CD8-positive, alpha-beta T cell (primary cell): ENCODE measurements at regions of chr17 and their contacts with region 1.

Region 1: DNA sequence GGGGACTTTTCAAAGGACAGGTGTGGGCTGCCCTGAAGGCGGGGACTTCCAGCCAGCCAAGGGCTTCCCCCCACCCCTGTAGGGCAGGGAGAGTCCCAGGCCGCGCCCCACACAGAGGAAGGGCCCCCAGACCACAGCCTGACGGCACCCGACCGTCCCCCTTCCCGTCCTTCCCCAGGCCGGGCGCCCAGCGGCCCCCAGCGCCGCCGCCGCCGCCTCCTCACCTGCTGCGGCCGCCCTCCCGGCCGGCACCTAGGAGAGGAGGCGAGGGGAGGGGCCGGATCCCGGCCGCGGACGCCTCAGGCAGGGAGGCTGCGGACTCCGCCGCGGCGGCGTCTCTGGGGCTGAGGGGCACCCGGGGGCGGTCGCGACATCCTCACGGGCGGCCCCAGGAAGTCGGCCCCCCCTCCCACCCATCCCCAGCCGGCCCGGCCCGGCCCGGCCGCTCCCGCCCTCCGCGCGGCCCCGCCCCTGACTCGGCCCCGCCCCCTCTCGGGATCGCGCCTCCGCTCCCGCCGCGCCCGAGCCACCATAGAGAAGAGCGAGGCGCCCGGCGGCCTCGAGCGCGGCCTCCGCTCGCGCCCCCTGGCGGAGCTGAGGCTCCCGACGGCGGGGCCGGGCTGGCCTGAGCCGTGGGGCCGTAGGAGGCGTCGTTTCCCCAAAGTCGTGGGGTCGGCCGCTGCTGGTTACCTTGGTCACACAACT is 25.5 kb upstream of the RFFL start:
- DNase-seq: peak; percentile 81 to 96 (median 91)
- ATAC-seq: peak; percentile 78
- H3K4me3 ChIP-seq: peak overlapping the region; percentile 68
- H3K4me3 Mint-ChIP-seq: peak overlapping the region; percentile 97
- H3K27ac ChIP-seq: peak overlapping the region; percentile 65 to 89
- H3K27ac Mint-ChIP-seq: peak overlapping the region; percentile 98
- H3K4me1 ChIP-seq: peaks cover 27% of the 10 kb centered on the region
- H3K4me1 Mint-ChIP-seq: peaks cover 43% of the 10 kb centered on the region
- H3K27me3 ChIP-seq: no peaks in the 10 kb centered on the region
- H3K27me3 Mint-ChIP-seq: no peaks in the 10 kb centered on the region
- CTCF ChIP-seq: peak; percentile 69

Region 2: DNA sequence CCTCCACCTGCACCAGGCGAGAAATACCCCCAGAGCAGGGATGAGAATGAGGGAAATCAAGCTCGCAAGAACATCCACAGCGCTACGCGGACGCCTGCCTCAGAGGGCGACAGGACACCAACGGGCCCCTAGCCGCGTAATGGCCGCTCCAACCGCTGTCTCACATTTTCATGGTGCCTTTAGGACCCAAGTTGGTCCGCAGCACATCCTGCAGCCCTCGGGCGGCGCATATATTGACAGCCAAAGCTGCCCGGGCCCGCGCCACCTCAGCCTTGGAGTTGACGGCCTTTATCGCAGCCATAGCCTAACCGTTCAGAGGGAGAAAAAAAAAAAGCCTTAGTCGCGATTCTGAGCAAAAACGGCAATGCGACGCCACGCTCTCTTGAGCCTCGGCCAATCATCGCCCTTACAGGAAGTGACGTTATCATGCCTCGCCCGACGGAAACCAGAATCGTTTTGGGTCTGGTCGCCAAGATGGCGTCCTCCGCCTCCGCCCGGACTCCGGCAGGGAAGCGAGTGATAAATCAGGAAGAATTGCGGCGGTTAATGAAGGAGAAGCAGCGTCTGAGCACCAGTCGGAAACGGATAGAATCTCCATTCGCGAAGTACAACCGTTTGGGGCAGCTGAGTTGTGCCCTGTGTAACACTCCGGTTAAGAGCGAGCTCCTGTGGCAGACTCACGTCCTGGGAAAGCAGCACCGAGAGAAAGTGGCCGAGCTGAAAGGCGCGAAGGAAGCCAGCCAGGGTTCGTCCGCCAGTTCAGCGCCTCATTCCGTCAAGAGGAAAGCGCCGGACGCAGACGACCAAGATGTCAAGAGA is 127.7 kb before region 1 on chr17 and contains the starts of genes CCT6B and ZNF830:
- CTCF ChIA-PET with region 1: interaction called, 3 read pairs
- POLR2A ChIA-PET with region 1: interaction called, 5 read pairs
- intact Hi-C with region 1: loop called (anchors 1 kb)
- DNase-seq: peak; percentile 75 to 97 (median 92)
- ATAC-seq: peak; percentile 88
- H3K4me3 ChIP-seq: peak within 1 kb of the TSS; percentile 72 to 78
- H3K4me3 Mint-ChIP-seq: peak within 1 kb of the TSS; percentile 100
- H3K27ac ChIP-seq: peak within 1 kb of the TSS; percentile 84 to 99
- H3K27ac Mint-ChIP-seq: peak within 1 kb of the TSS; percentile 99
- H3K4me1 ChIP-seq: peaks cover 22% of the 10 kb centered on the region
- H3K4me1 Mint-ChIP-seq: peaks cover 40% of the 10 kb centered on the region
- H3K27me3 ChIP-seq: no peaks in the 10 kb centered on the region
- H3K27me3 Mint-ChIP-seq: peaks cover 6% of the 10 kb centered on the region
- CTCF ChIP-seq: no peak
- total RNA-seq, gene CCT6B: 4.0 to 5.9 TPM
- total RNA-seq, gene ZNF830: 43.6 to 45.0 TPM

Region 3: DNA sequence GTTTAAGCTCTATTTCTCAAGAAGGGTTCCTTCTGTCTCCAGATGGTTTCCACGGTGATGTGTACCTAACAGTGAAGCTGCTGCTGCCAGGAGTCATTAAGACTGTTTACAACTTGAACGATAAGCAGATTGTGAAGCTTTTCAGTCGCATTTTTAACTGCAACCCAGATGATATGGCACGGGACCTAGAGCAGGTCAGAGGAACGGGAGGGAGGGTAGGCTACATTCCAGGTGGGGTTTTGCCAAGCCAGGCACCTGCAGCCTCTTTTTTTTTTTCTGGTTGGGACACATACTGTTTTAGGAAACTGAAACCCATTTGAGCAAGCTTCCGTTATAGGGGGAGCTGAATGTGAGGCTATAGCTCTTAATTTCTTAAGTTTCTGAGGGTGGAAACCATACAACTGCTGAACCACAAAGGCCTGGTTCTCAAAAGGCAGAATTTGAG is 98.1 kb before region 1 on chr17:
- CTCF ChIA-PET with region 1: interaction called, 20 read pairs
- POLR2A ChIA-PET with region 1: interaction called, 4 read pairs
- intact Hi-C with region 1: no loop called
- DNase-seq: no peak
- ATAC-seq: no peak
- H3K4me3 ChIP-seq: no peak overlapping the region
- H3K4me3 Mint-ChIP-seq: no peak overlapping the region
- H3K27ac ChIP-seq: no peak overlapping the region
- H3K27ac Mint-ChIP-seq: no peak overlapping the region
- H3K4me1 ChIP-seq: no peaks in the 10 kb centered on the region
- H3K4me1 Mint-ChIP-seq: peaks cover 5% of the 10 kb centered on the region
- H3K27me3 ChIP-seq: no peaks in the 10 kb centered on the region
- H3K27me3 Mint-ChIP-seq: no peaks in the 10 kb centered on the region
- CTCF ChIP-seq: no peak

Region 4: GRCh38 chr17:35022536-35023063 is 66.4 kb before region 1 on chr17:
- CTCF ChIA-PET with region 1: interaction called, 9 read pairs
- POLR2A ChIA-PET with region 1: interaction called, 7 read pairs
- intact Hi-C with region 1: loop called (anchors 1 kb)
- DNase-seq: peak; percentile 43 to 88 (median 79)
- ATAC-seq: peak; percentile 96
- H3K4me3 ChIP-seq: no peak overlapping the region
- H3K4me3 Mint-ChIP-seq: peak overlapping the region; percentile 57
- H3K27ac ChIP-seq: peak overlapping the region; percentile 49 to 88
- H3K27ac Mint-ChIP-seq: peak overlapping the region; percentile 98
- H3K4me1 ChIP-seq: peaks cover 31% of the 10 kb centered on the region
- H3K4me1 Mint-ChIP-seq: peaks cover 58% of the 10 kb centered on the region
- H3K27me3 ChIP-seq: no peaks in the 10 kb centered on the region
- H3K27me3 Mint-ChIP-seq: no peaks in the 10 kb centered on the region
- CTCF ChIP-seq: no peak

Region 5: DNA sequence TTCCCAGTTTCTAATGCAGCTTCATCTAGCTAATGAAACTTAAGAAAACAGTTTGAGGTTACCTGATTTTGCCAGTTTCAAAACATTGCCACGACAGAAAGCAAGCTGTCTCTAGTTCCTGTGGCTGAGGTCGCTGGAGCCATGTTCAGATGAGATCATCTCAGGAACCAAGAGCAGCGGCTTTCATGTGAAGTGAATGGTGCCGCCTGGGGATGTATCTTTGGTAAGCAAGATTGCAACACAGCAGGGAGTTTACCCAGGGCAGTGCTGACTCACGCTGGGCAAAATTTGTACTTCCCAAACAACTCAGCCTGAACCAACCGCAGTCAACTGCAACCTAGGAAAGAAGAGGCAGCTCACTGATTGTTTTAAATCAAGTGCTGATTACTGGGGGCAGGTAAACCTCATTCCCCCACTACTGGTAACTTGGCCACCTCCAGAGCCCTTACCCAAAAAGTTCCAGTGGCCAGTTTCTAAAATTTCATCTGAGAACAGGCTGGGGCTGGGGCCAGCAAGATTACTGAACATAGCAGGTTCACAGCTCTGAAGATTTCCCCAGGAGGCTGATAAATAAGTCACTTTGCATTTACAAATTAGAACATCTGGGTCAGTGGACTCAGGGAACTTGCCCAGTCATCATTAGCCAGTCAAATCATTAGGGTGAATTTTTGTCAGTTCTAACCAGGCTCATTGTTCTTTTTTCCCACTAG is 25.4 kb before region 1 on chr17 and contains the start of gene RFFL:
- CTCF ChIA-PET with region 1: interaction called, 17 read pairs
- POLR2A ChIA-PET with region 1: interaction called, 13 read pairs
- intact Hi-C with region 1: loop called (anchors 1 kb)
- DNase-seq: peak; percentile 62 to 97 (median 85)
- ATAC-seq: peak; percentile 98
- H3K4me3 ChIP-seq: peak within 1 kb of the TSS in 1 of 2 experiments; percentile 38
- H3K4me3 Mint-ChIP-seq: peak within 1 kb of the TSS; percentile 85
- H3K27ac ChIP-seq: peak within 1 kb of the TSS; percentile 63 to 73
- H3K27ac Mint-ChIP-seq: peak within 1 kb of the TSS; percentile 97
- H3K4me1 ChIP-seq: peaks cover 35% of the 10 kb centered on the region
- H3K4me1 Mint-ChIP-seq: peaks cover 66% of the 10 kb centered on the region
- H3K27me3 ChIP-seq: no peaks in the 10 kb centered on the region
- H3K27me3 Mint-ChIP-seq: no peaks in the 10 kb centered on the region
- CTCF ChIP-seq: no peak
- total RNA-seq, gene RFFL: 55.2 to 64.4 TPM

Region 6: GRCh38 chr17:35141681-35142466 is 52.8 kb after region 1 on chr17 and contains the start of gene NLE1:
- CTCF ChIA-PET with region 1: no interaction called
- POLR2A ChIA-PET with region 1: interaction called, 3 read pairs
- intact Hi-C with region 1: loop called (anchors 1 kb)
- DNase-seq: peak; percentile 82 to 93 (median 88)
- ATAC-seq: peak; percentile 97
- H3K4me3 ChIP-seq: peak within 1 kb of the TSS; percentile 98 to 99
- H3K4me3 Mint-ChIP-seq: peak within 1 kb of the TSS; percentile 85
- H3K27ac ChIP-seq: peak within 1 kb of the TSS; percentile 54 to 72
- H3K27ac Mint-ChIP-seq: peak within 1 kb of the TSS; percentile 76
- H3K4me1 ChIP-seq: peaks cover 8% of the 10 kb centered on the region
- H3K4me1 Mint-ChIP-seq: peaks cover 17% of the 10 kb centered on the region
- H3K27me3 ChIP-seq: no peaks in the 10 kb centered on the region
- H3K27me3 Mint-ChIP-seq: no peaks in the 10 kb centered on the region
- CTCF ChIP-seq: peak; percentile 97
- total RNA-seq, gene NLE1: 9.4 to 11.3 TPM